Esophagus squamous epithelium (tissue), 5 donors: ENCODE measurements at regions of chr7 and their contacts with region 1.

Region 1: DNA sequence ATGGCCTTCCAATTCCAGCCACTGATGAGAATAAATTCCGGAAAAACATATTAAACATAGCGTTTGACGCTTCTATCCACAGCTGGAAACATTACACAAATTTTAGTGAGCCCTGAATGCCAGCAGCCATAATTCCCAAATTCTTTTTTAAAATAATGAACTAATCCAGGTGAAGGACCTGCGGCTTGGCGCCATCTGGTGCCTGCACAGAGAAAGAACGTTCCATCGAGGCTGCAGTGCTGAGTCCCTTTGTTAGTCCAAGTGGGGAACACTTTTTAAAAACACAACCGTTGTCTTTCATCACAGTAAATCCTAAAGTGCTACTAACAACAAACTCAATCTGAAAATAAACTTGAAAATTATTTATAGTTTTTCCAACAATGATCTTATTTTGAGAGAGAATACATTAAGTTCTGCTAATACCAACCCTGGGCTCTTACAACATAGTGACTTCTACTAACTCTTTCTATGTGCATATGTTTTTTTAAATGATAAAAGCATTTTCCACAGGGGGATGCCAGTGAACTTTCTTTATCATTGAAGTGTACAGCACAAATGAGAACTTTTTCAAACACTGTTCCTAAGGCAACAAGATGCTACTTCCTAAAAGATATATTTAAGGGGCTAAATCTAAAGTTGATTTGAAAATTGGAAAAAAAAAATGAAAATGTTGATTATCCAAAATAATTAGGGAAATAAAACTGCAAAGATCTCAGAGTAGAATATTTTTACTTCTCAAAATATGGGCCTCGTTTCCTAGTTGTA is 166.9 kb upstream of the RNF32 start:
- DNase-seq: no peak
- H3K4me3 ChIP-seq: no peak overlapping the region
- H3K27ac ChIP-seq: no peak overlapping the region
- H3K4me1 ChIP-seq: peaks cover 0 to 4% (median 0%) of the 10 kb centered on the region in 3 donors
- H3K27me3 ChIP-seq: peaks cover 0 to 16% (median 0%) of the 10 kb centered on the region in 4 donors
- CTCF ChIP-seq: peak in 5 of 6 experiments; percentile 48 to 75 (median 58)
- POLR2A ChIP-seq: no peak

Region 2: GRCh38 chr7:155804897-155805825 is 668.5 kb before region 1 on chr7:
- intact Hi-C with region 1: loop called (anchors 5 kb)
- DNase-seq: no peak
- H3K4me3 ChIP-seq: peak overlapping the region; percentile 18 to 53 (median 30)
- H3K27ac ChIP-seq: no peak overlapping the region
- H3K4me1 ChIP-seq: peaks cover 34 to 66% (median 52%) of the 10 kb centered on the region in 3 donors
- H3K27me3 ChIP-seq: peaks cover 20 to 100% (median 30%) of the 10 kb centered on the region in 4 donors
- CTCF ChIP-seq: peak in 3 of 6 experiments; percentile 26 to 65 (median 33)
- POLR2A ChIP-seq: no peak